Uterus (tissue), 4 donors: ENCODE measurements at regions of chr10 and their contacts with region 1.

Region 1: GRCh38 chr10:11515596-11516430 is 95.6 kb downstream of the USP6NL start:
- DNase-seq: peak; percentile 27 to 43
- H3K4me3 ChIP-seq: no peak overlapping the region
- H3K27ac ChIP-seq: no peak overlapping the region
- H3K4me1 ChIP-seq: no peaks in the 10 kb centered on the region
- H3K27me3 ChIP-seq: no peaks in the 10 kb centered on the region
- CTCF ChIP-seq: peak; percentile 74 to 90 (median 82)
- POLR2A ChIP-seq: no peak

Region 2: GRCh38 chr10:11724938-11725776 is 209.3 kb after region 1 on chr10:
- intact Hi-C with region 1: loop called (anchors 10 kb)
- DNase-seq: no peak
- H3K4me3 ChIP-seq: no peak overlapping the region
- H3K27ac ChIP-seq: no peak overlapping the region
- H3K4me1 ChIP-seq: no peaks in the 10 kb centered on the region
- H3K27me3 ChIP-seq: no peaks in the 10 kb centered on the region
- CTCF ChIP-seq: peak; percentile 58 to 87 (median 77)
- POLR2A ChIP-seq: no peak

Region 3: GRCh38 chr10:11742005-11742778 is 226.4 kb after region 1 on chr10 and contains the start of gene ECHDC3:
- intact Hi-C with region 1: no loop called
- DNase-seq: peak; percentile 38 to 67
- H3K4me3 ChIP-seq: peak within 1 kb of the TSS; percentile 35 to 52
- H3K27ac ChIP-seq: peak within 1 kb of the TSS; percentile 20 to 88
- H3K4me1 ChIP-seq: no peaks in the 10 kb centered on the region
- H3K27me3 ChIP-seq: no peaks in the 10 kb centered on the region
- CTCF ChIP-seq: no peak
- POLR2A ChIP-seq: no peak
- total RNA-seq, gene ECHDC3: 7.9 to 26.9 (median 14.1) TPM

Region 4: GRCh38 chr10:11757821-11758463 is 242.1 kb after region 1 on chr10:
- intact Hi-C with region 1: loop called (anchors 10 kb)
- DNase-seq: peak; percentile 82 to 87
- H3K4me3 ChIP-seq: no peak overlapping the region
- H3K27ac ChIP-seq: peak overlapping the region; percentile 71 to 78
- H3K4me1 ChIP-seq: peaks cover 3 to 7% of the 10 kb centered on the region in 2 donors
- H3K27me3 ChIP-seq: no peaks in the 10 kb centered on the region
- CTCF ChIP-seq: peak; percentile 77 to 93 (median 86)
- POLR2A ChIP-seq: no peak